ENCODE measurements at regions of chr6 and their contacts with region 1.

Region 1: DNA sequence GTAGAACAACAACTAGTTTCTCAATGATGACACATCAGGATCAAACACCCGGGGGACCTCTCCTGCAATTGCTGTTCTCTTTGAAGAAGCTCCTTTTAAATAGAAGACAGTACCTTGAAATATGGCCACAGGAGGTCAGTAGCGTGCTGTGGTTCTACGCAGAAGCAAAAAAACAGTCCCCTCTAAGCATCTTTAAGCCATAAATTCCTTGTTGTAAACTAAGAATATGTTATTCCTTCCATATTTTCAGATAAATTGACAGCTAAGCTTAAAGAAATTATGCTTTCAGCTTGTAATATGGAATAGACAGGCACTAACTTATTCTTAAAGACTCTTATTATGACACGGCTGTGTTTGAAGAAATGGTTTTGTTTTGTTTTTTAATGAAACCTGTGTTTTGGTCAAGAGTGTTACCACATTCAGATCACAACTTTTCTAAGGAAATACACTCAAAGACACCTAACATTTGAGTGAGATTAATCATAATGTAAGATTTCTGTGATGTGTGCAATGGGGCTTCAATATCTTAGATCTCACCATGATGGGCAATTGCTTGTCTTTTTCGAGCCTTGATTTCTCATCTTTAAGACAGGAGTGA is 49.7 kb upstream of the IL20RA start:
- DNase-seq: no peak

Region 2: DNA sequence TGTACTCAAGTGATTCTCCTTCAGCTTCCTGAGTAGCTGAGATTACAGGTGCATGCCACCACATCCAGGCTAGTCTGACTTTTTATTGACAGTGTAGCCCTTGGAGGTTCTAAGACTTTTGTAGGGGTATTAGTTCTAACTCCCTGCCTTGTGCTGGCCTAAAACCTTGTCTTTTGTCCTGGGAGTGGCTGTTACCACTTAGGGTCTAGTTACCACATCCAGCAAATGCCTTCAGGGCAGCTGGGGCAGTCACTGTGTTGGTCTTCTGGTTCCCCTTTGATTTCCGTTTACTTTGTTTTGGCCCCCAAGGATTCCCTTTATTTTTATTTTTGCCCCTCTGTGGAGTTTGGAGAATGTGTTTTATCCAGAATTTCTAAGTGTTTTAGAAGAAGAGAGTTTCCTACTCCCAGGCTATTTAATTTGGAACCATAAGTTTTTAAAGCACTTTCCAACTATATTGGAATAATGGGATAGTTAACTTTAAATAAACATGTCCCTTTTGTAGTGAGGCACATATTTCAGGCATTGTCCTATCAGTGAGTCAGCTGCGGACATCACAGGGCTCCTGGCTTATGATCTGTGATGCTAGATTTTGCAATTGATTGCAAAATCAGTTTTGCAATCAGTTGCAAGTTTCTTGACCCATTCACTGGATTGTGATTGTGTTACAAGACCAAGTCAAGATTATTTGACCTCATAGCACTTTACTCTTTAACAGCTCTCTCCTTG is 54.0 kb after region 1 on chr6:
- intact Hi-C with region 1: no loop called
- DNase-seq: no peak

Region 3: DNA sequence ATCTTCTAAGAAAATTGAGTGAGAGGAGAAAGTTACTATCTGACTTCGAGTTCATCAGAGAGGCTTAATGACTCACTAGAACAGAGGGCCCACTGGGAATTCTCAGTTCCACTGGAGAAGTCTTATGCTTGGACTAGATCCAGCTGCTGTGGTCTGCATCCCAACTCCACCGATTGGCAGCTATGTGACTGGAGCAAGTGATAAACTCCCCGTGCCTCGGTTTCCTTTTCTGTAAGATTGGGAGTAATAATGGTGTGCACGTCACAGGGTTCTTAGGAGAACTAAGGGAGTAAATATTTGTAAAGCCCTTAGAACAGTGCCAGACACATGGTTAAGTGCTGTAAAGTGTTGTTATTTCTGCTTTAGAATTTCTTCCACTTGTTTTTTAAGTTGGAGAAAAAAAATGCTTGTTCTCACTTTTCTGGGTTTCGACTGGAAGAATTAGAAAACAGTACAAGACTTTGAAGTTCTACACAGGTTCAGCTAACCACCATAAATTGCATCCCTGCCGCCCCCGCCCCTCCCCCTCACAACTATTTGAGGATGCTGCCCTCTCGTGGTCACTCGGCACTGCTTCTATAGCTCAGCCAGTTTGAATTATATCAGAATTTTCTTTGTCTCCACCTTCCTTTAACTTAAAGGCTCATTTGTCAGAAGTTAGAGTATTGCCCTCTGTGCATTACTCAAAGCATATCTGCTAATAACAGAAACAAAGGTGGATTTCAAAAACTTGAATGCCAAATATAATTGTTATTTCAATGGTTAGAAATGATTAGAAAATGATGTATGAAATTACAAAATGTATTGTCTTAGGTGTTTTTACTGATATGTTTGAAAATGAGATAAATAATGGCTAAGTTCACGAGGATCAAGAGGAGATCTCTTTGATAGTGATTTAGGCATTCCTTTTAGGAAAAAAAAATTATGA is 219.7 kb after region 1 on chr6:
- intact Hi-C with region 1: loop called (anchors 5 to 10 kb)
- DNase-seq: peak; percentile 89

Region 4: DNA sequence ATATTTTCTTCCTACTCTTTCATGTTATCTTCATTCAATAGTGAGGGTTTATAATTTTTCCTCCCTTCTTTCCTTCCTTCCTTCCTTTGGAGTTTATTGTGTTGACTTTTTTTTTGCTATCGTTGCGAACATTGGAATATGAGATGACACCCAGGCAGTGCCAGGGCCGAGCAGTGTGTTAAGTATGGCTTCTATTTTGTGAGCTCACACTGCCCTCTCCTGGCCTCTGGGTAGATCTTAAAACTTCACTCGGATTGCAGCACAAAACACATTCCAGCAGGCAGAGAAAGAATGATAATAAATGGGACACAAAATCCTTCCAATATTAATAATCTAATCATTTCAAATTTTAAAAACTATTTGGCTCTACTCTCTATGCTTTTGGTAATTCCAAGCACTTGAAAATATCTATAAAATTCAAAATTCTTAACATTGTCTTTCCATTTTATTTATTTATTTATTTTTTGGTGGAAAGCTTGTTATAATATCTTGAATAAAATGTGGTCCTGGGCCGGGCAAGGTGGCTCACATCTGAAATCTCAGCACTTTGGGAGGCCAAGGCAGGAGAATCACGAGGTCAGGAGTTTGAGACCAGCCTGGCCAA is 547.1 kb after region 1 on chr6:
- intact Hi-C with region 1: loop called in 1 of 2 experiments (anchors 10 kb)
- DNase-seq: no peak